Thyroid gland (tissue), 4 donors: ENCODE measurements at regions of chr10 and their contacts with region 1.

Region 1: DNA sequence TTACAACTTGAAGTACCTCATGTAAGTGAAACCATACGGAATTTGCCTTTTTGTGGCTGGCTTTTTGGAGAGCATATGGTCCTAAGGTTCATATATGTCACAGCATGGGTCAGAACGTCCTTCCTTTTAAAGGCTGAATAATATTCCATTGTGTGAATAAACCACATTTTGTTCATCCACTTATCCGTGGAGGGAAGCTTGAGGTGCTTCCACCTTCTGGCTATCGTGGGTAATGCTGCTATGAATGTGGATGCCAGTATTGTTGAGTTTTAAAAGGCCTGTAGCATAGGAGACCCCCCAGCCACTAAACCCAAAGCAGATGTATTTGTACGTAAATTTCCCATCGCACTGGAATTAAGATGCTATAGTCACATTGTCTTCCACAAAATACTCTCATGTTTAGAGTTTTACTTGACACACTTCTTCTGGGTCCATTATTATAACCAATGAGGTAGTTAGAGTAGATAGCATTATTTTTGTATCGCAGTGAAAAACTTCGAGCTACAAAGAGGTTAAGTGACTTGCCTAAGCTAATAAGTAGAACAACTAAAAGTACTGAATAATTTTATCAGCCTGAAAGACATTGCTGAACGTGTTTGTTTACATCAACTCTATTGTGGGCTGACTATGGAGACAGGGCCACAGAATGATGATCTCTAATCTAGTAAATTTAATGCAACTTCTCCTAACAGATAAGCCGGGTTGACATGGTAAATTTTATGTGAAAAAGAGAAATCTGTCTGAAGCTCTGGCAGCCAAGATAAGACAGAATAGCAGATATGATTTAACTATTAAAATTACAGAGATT is 183.0 kb upstream of the CTBP2 start:
- DNase-seq: peak; percentile 14 to 17
- H3K4me3 ChIP-seq: no peak overlapping the region
- H3K27ac ChIP-seq: no peak overlapping the region
- H3K4me1 ChIP-seq: no peaks in the 10 kb centered on the region
- H3K27me3 ChIP-seq: no peaks in the 10 kb centered on the region
- CTCF ChIP-seq: peak in 5 of 6 experiments; percentile 29 to 62 (median 51)
- POLR2A ChIP-seq: no peak

Region 2: GRCh38 chr10:125048101-125048864 is 295.0 kb before region 1 on chr10:
- intact Hi-C with region 1: loop called (anchors 10 kb)
- DNase-seq: peak; percentile 89 to 90
- H3K4me3 ChIP-seq: no peak overlapping the region
- H3K27ac ChIP-seq: peak overlapping the region; percentile 30 to 64 (median 40)
- H3K4me1 ChIP-seq: peaks cover 59 to 72% of the 10 kb centered on the region in 2 donors
- H3K27me3 ChIP-seq: no peaks in the 10 kb centered on the region
- CTCF ChIP-seq: peak; percentile 84 to 95 (median 94)
- POLR2A ChIP-seq: no peak

Region 3: DNA sequence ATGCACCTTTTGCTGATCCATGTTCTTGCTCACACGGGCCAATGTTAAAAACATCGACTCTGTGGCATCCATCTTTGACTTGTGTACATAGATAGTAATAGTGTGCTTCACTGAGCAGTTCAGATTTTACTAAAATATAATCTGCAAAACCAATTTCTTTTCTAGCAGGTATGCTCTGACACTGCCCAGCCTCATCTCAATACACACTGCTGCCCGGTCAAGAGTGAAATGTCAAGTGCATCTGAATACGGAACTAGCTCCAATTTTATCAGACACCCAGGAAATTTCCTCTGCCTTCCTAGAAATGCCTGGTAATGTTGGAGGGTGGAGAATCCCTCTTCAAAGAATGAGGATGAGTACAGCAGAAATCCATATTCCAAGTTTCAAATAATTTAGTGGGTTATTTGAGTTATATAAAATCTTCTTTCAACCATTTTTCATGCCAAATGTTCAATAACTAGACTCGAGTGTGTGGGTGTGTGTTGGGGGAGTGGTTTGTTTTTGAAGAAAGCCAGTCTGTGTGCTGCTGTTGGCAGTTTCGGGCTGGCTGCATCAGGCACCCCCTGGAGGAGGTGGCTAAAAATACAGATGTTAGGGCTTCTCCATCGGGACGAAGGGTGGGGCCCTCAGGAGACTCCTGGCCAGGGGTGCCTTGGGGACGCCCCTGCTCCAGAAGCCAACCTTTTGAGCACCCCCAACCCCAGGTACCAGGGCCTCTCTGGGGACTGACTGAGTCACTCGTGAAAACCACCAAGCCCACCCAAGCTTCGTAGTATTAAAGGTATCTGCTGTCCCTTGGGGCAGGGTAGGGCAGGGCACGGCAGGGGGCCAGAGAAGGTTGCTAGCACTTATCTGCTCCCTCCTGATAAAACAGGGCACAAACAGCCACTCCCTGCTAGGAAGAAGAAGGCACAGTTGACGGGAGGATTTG is 198.4 kb before region 1 on chr10:
- intact Hi-C with region 1: no loop called
- DNase-seq: peak; percentile 69
- H3K4me3 ChIP-seq: no peak overlapping the region
- H3K27ac ChIP-seq: peak overlapping the region; percentile 78 to 84 (median 82)
- H3K4me1 ChIP-seq: peaks cover 71 to 88% of the 10 kb centered on the region in 2 donors
- H3K27me3 ChIP-seq: no peaks in the 10 kb centered on the region
- CTCF ChIP-seq: peak in 3 of 6 experiments; percentile 35 to 42 (median 41)
- POLR2A ChIP-seq: no peak

Region 4: GRCh38 chr10:125578658-125579315 is 235.5 kb after region 1 on chr10:
- intact Hi-C with region 1: no loop called
- DNase-seq: no peak
- H3K4me3 ChIP-seq: no peak overlapping the region
- H3K27ac ChIP-seq: no peak overlapping the region
- H3K4me1 ChIP-seq: no peaks in the 10 kb centered on the region
- H3K27me3 ChIP-seq: no peaks in the 10 kb centered on the region
- CTCF ChIP-seq: no peak
- POLR2A ChIP-seq: no peak